H1 (cell line): ENCODE measurements at regions of chr17 and their contacts with region 1.

Region 1: DNA sequence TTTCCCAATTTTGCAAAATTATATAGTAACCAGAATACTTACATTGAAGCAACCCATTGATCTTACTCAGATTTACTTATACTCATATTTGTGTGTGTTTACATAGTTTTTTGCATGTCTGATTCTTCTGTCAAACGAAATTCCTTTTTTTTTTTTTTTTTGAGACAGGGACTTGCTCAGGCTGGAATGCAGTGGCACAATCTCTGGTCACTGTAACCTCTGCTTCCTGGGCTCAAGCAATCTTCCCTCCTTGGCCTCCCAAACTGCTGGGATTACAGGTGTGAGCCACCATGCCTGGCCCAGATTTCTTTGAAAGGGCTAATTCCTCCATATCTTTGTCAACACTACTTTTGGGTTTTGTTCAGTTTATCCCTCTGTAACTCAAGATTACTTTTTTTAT is 23.1 kb upstream of the GJD3 start:
- DNase-seq: no peak
- H3K4me3 ChIP-seq: no peak overlapping the region
- H3K27ac ChIP-seq: no peak overlapping the region
- H3K4me1 ChIP-seq: no peaks in the 10 kb centered on the region
- H3K27me3 ChIP-seq: no peaks in the 10 kb centered on the region
- CTCF ChIP-seq: no peak
- EP300 ChIP-seq: no peak
- POLR2A ChIP-seq: no peak
- RAD21 ChIP-seq: no peak

Region 2: DNA sequence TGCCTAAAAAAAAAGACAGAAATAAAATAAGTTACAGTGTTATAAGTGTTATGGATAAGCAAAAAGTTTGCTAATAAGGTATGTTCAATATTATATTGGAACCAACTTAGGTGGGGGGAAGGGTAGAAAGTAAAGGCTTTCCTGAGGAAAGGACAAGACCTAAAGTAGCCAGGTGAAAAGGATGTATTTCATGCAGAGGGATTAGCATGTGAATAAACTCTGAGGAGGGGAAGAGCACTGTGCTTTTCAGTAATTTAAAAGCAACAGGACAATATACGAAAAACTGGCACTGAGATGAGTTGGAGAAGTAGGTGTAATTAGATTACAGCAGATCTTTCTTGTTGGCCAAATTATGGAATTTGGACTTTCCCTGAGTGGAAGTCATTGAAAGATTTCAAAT is 22.4 kb after region 1 on chr17:
- CTCF ChIA-PET with region 1: interaction called, 9 read pairs
- POLR2A ChIA-PET with region 1: interaction called, 23 read pairs
- DNase-seq: no peak
- H3K4me3 ChIP-seq: peak overlapping the region in 1 of 4 experiments; percentile 38; a peak in 2 of 8 replicates
- H3K27ac ChIP-seq: peak overlapping the region; percentile 33; the same call in 1 of the 2 replicates
- H3K4me1 ChIP-seq: peaks cover 0 to 12% (median 1%) of the 10 kb centered on the region in 4 experiments; a peak in 3 of 7 replicates
- H3K27me3 ChIP-seq: no peaks in the 10 kb centered on the region
- CTCF ChIP-seq: no peak
- EP300 ChIP-seq: no peak
- POLR2A ChIP-seq: no peak
- RAD21 ChIP-seq: no peak

Region 3: DNA sequence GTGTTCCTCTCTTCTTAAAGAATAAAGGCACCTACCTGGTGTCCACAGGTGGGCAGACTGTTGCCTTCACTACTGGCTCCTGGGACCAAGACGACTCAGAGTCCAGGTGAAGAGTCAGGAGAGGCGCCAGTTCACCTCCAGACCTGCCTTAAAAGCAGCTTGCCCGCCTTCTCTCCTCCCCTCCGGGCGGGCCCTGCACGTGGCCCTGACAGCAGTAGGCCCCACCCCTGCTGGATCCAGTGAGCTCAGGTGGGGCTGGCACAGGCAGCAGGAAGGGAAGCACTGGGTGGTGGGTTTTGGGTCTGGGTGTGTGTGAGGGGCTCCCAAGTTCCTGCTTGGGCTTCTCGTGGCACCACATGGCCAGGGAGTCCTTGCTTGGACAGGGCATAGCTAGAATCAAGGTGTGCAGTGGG is 113.8 kb after region 1 on chr17 and contains the start of gene TNS4:
- CTCF ChIA-PET with region 1: no interaction called
- POLR2A ChIA-PET with region 1: no interaction called
- DNase-seq: no peak
- H3K4me3 ChIP-seq: no peak within 1 kb of the TSS
- H3K27ac ChIP-seq: no peak within 1 kb of the TSS
- H3K4me1 ChIP-seq: peaks cover 5 to 18% (median 7%) of the 10 kb centered on the region in 4 experiments; a peak in 6 of 7 replicates
- H3K27me3 ChIP-seq: no peaks in the 10 kb centered on the region
- CTCF ChIP-seq: no peak
- EP300 ChIP-seq: no peak
- POLR2A ChIP-seq: no peak
- RAD21 ChIP-seq: no peak
- total RNA-seq, gene TNS4: 0.20 and 0.80 TPM in 2 replicates